GM12878 (cell line): ENCODE measurements at regions of chr1 and their contacts with region 1.

Region 1: DNA sequence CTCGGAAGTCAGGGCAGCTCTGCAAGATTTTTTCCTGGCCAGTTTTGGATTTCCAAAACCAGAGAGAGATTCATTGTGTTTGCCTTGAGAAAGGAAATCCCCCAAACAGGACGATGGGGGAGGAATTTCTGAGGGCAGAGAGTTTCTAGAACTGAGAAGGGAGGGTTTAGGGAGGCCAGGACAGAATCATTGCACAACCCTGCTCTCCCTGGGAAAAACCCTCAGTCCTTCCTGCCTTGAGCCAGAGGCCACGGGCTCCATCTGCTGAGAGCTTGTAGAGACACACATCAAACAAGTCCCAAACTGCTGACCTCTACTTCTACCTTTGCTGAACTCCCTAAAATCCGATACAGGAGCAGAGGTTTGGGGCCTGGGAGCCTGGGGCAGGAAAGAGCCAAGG is 99.7 kb downstream of the NMNAT2 start:
- DNase-seq: peak; percentile 55
- ATAC-seq: peak; percentile 96
- H3K4me3 ChIP-seq: no peak overlapping the region
- H3K27ac ChIP-seq: no peak overlapping the region
- H3K4me1 ChIP-seq: peaks cover 6% of the 10 kb centered on the region
- H3K27me3 ChIP-seq: no peaks in the 10 kb centered on the region
- CTCF ChIP-seq: peak; percentile 44 to 92 (median 57); a peak in 5 of 6 replicates
- EP300 ChIP-seq: no peak
- POLR2A ChIP-seq: no peak
- RAD21 ChIP-seq: peak; percentile 82

Region 2: DNA sequence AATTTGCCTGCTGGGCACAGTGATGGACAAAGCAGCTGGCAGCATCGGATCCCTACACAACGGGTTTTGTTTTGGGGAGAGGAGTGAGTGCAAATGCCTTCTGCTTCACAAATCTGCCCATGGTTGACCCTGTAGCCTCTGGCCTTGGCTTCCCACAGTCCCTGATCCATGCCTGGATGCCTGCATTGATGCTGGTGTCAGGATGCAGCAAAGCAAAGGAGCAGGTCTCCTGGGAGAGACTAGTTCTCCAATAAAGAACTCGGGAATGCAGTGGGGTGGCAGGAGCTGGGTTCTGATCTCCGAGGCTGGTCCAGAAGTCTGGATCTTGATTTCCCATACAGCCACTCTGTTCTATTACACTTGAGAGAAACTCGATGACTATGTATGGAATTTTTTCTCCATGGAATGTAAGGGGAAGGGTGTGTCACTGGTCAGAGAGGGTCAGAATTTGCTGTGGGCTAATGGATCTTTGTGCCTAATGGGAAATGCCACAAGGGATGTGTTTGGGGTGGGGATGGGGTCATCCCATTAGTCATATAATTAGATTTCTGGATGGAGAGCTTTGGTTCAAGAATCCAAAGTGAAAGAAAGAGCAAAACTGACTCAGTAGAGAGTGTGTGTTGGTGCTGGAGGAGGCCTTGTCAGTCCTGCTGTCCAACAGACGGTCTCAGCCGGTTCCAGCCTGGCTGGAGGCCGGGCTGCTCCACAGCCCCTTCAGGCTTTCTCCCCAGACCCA is 46.2 kb before region 1 on chr1:
- CTCF ChIA-PET with region 1: interaction called, 146 read pairs
- POLR2A ChIA-PET with region 1: no interaction called
- RAD21 ChIA-PET with region 1: interaction called, 114 read pairs
- SMC1A ChIA-PET with region 1: interaction called, 10 read pairs
- in situ Hi-C with region 1: no loop called
- intact Hi-C with region 1: no loop called
- DNase-seq: no peak
- ATAC-seq: no peak
- H3K4me3 ChIP-seq: no peak overlapping the region
- H3K27ac ChIP-seq: no peak overlapping the region
- H3K4me1 ChIP-seq: no peaks in the 10 kb centered on the region
- H3K27me3 ChIP-seq: no peaks in the 10 kb centered on the region; a peak in 1 of 4 replicates
- CTCF ChIP-seq: no peak
- EP300 ChIP-seq: no peak
- POLR2A ChIP-seq: no peak
- RAD21 ChIP-seq: no peak

Region 3: GRCh38 chr1:183385340-183386144 is 67.1 kb after region 1 on chr1:
- CTCF ChIA-PET with region 1: no interaction called
- POLR2A ChIA-PET with region 1: no interaction called
- RAD21 ChIA-PET with region 1: no interaction called
- SMC1A ChIA-PET with region 1: no interaction called
- in situ Hi-C with region 1: no loop called
- intact Hi-C with region 1: no loop called
- DNase-seq: no peak
- ATAC-seq: no peak
- H3K4me3 ChIP-seq: no peak overlapping the region
- H3K27ac ChIP-seq: no peak overlapping the region
- H3K4me1 ChIP-seq: no peaks in the 10 kb centered on the region
- H3K27me3 ChIP-seq: no peaks in the 10 kb centered on the region; a peak in 1 of 4 replicates
- CTCF ChIP-seq: no peak
- EP300 ChIP-seq: no peak
- POLR2A ChIP-seq: no peak
- RAD21 ChIP-seq: no peak